ENCODE measurements at regions of chr12 and their contacts with region 1.

Region 1: GRCh38 chr12:188910-189621 is 24.9 kb downstream of the SLC6A12 start:
- DNase-seq: no peak
- ATAC-seq: peak; percentile 91
- H3K4me3 ChIP-seq: peak overlapping the region; percentile 49 to 71 (median 54); a peak in 5 of 6 replicates
- H3K27ac ChIP-seq: no peak overlapping the region
- H3K4me1 ChIP-seq: peaks cover 6% of the 10 kb centered on the region; the same call in 1 of the 2 replicates
- H3K27me3 ChIP-seq: peaks cover 6 to 12% of the 10 kb centered on the region in 2 experiments; a peak in 3 of 5 replicates
- CTCF ChIP-seq: peak; percentile 75
- EP300 ChIP-seq: no peak
- POLR2A ChIP-seq: no peak
- RAD21 ChIP-seq: peak; percentile 91

Region 2: GRCh38 chr12:219891-220352 is 30.9 kb after region 1 on chr12:
- CTCF ChIA-PET with region 1: interaction called, 11 read pairs
- POLR2A ChIA-PET with region 1: interaction called, 5 read pairs
- in situ Hi-C with region 1: no loop called
- intact Hi-C with region 1: no loop called
- DNase-seq: peak; percentile 69
- ATAC-seq: peak; percentile 95
- H3K4me3 ChIP-seq: no peak overlapping the region; a peak in 1 of 6 replicates
- H3K27ac ChIP-seq: no peak overlapping the region
- H3K4me1 ChIP-seq: peaks cover 16% of the 10 kb centered on the region
- H3K27me3 ChIP-seq: peaks cover 1 to 3% of the 10 kb centered on the region in 2 experiments; a peak in 1 of 5 replicates
- CTCF ChIP-seq: peak; percentile 97
- EP300 ChIP-seq: no peak
- POLR2A ChIP-seq: no peak
- RAD21 ChIP-seq: peak; percentile 97

Region 3: DNA sequence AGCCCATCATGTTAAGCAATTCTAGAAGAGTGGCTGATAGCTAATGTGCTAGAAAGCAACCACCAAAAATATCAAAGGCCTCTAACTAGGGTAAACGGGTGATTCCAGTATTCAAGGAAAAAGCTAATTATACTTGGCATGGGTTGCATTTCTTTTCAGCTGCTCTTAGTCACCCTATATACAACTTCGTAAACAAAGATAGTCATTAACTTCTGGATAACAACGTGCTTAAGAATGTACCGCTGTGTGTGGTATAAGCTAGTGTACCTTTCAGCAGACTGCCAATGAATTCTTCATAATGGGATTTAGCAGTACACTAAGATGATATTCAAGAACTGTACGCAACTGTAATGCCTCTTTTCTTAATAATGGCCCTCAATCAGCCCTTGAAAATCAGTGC is 115.7 kb after region 1 on chr12:
- CTCF ChIA-PET with region 1: no interaction called
- POLR2A ChIA-PET with region 1: no interaction called
- in situ Hi-C with region 1: no loop called
- intact Hi-C with region 1: no loop called
- DNase-seq: no peak
- ATAC-seq: no peak
- H3K4me3 ChIP-seq: no peak overlapping the region
- H3K27ac ChIP-seq: no peak overlapping the region
- H3K4me1 ChIP-seq: no peaks in the 10 kb centered on the region
- H3K27me3 ChIP-seq: no peaks in the 10 kb centered on the region
- CTCF ChIP-seq: no peak
- EP300 ChIP-seq: no peak
- POLR2A ChIP-seq: no peak
- RAD21 ChIP-seq: no peak